ENCODE measurements at regions of chr14 and their contacts with region 1.

Region 1: GRCh38 chr14:23286020-23286905 is at the start of gene HOMEZ:
- DNase-seq: peak; percentile 100
- ATAC-seq: peak; percentile 93 to 95
- H3K4me3 ChIP-seq: peak within 1 kb of the TSS; percentile 84 to 99 (median 94)
- H3K27ac ChIP-seq: peak within 1 kb of the TSS; percentile 98 to 100 (median 100)
- H3K4me1 ChIP-seq: peaks cover 20 to 25% of the 10 kb centered on the region in 2 donors
- H3K27me3 ChIP-seq: no peaks in the 10 kb centered on the region
- CTCF ChIP-seq: peak in 3 of 5 experiments; percentile 11 to 23 (median 21)
- POLR2A ChIP-seq: peak; percentile 88 to 91
- total RNA-seq, gene HOMEZ: 7.8 to 10.0 (median 8.4) TPM

Region 2: GRCh38 chr14:22589096-22589839 is 697.0 kb before region 1 on chr14 and contains the start of gene DAD1:
- in situ Hi-C with region 1: loop called in 2 of 4 experiments (anchors 25 kb)
- intact Hi-C with region 1: no loop called
- DNase-seq: peak; percentile 97 to 98
- ATAC-seq: peak; percentile 100
- H3K4me3 ChIP-seq: peak within 1 kb of the TSS; percentile 70 to 95 (median 83)
- H3K27ac ChIP-seq: peak within 1 kb of the TSS; percentile 82 to 92 (median 87)
- H3K4me1 ChIP-seq: peaks cover 27 to 35% of the 10 kb centered on the region in 2 donors
- H3K27me3 ChIP-seq: no peaks in the 10 kb centered on the region
- CTCF ChIP-seq: peak in 1 of 5 experiments; percentile 27
- POLR2A ChIP-seq: peak; percentile 78 to 84
- total RNA-seq, gene DAD1: 155 to 257 (median 209) TPM

Region 3: GRCh38 chr14:23120541-23121251 is 165.6 kb before region 1 on chr14:
- in situ Hi-C with region 1: loop called in 2 of 4 experiments (anchors 25 kb)
- intact Hi-C with region 1: loop called (anchors 5 kb)
- DNase-seq: peak; percentile 81 to 88
- ATAC-seq: peak; percentile 51 to 70
- H3K4me3 ChIP-seq: no peak overlapping the region
- H3K27ac ChIP-seq: peak overlapping the region; percentile 56 to 85 (median 76)
- H3K4me1 ChIP-seq: peaks cover 22 to 29% of the 10 kb centered on the region in 2 donors
- H3K27me3 ChIP-seq: peaks cover 0 to 3% (median 0%) of the 10 kb centered on the region in 3 donors
- CTCF ChIP-seq: peak; percentile 100
- POLR2A ChIP-seq: no peak

Region 4: DNA sequence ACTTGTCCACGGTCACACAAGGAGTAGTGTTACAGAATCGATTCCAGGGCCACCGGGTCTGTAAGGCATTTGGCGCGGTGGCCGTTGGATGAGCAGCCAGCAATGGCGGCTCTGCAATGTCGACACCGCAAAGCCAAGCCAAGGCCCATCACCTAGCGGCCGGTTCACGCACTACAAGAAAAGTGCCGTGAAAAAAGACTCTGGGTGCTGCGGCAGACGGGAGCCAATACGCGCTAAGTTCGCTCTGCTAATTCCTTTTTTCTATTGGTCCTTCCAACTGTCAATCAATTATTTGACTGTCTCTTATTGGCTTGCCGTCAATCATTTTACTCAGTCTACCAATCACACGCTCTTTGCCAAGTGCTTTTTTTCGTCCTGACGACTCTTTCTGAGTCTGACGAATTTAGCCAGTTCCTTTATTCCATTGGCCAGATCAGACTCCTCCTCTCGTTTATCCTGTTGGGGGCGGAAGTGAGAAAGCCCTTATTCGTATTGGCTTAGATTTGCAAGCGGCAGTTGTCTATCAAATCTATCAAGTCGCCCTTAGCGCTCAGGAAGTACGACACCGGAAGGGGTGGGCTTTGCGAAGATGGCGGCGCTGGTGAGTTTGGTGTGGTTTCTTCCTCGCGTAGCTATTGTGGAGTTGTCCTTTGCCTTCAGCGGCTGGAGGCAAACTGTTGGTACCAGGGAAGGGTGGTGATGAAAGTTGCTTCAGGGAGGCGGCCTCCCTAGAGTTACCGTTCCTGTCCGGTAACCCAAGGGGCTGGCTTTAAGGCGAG is 183.1 kb after region 1 on chr14 and contains the start of gene NGDN:
- in situ Hi-C with region 1: no loop called
- intact Hi-C with region 1: loop called (anchors 1 kb)
- DNase-seq: peak; percentile 96 to 97
- ATAC-seq: peak; percentile 98 to 99
- H3K4me3 ChIP-seq: peak within 1 kb of the TSS; percentile 74 to 98 (median 88)
- H3K27ac ChIP-seq: peak within 1 kb of the TSS; percentile 82 to 89 (median 86)
- H3K4me1 ChIP-seq: peaks cover 12% of the 10 kb centered on the region in 2 donors
- H3K27me3 ChIP-seq: no peaks in the 10 kb centered on the region
- CTCF ChIP-seq: peak; percentile 88 to 97 (median 95)
- POLR2A ChIP-seq: peak; percentile 44 to 73
- total RNA-seq, gene NGDN: 27.9 to 41.9 (median 36.1) TPM

Region 5: GRCh38 chr14:23694085-23694975 is 408.1 kb after region 1 on chr14:
- in situ Hi-C with region 1: no loop called
- intact Hi-C with region 1: no loop called
- DNase-seq: no peak
- ATAC-seq: no peak
- H3K4me3 ChIP-seq: no peak overlapping the region
- H3K27ac ChIP-seq: no peak overlapping the region
- H3K4me1 ChIP-seq: no peaks in the 10 kb centered on the region
- H3K27me3 ChIP-seq: peaks cover 0 to 7% (median 2%) of the 10 kb centered on the region in 3 donors
- CTCF ChIP-seq: no peak
- POLR2A ChIP-seq: no peak

Measured in gastrocnemius medialis (tissue), 4 donors.